Brain microvascular endothelial cell (primary cell): ENCODE measurements at regions of chr1 and their contacts with region 1.

Region 1: DNA sequence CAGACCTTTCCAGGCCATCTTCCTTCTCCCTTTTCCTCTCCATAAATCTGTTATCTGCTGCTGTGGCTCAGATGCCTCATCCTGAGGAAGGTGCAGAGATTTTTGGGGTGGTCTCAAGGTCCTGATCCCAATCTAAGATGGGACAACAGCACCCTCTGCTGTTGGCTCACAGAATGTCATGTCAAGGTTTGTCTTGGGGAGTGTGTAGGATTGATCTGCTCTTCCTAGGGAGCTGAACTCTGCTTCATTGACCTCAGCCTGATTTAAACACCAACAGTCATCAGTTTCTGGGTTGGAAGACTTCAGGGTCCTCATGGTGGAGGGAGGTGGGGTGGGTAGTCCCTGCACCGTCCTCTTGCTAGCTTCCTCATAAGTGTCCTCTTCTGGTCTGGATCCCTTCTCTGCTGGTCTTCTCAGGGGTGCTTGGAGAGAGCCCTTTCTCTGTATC is 62.8 kb upstream of the LAX1 start:
- DNase-seq: peak; percentile 22
- H3K4me3 ChIP-seq: no peak overlapping the region
- H3K27ac ChIP-seq: no peak overlapping the region
- H3K27me3 ChIP-seq: no peaks in the 10 kb centered on the region
- CTCF ChIP-seq: peak; percentile 83

Region 2: GRCh38 chr1:203504397-203505250 is 197.5 kb before region 1 on chr1:
- in situ Hi-C with region 1: loop called (anchors 25 kb)
- DNase-seq: peak; percentile 76
- H3K4me3 ChIP-seq: no peak overlapping the region
- H3K27ac ChIP-seq: no peak overlapping the region
- H3K27me3 ChIP-seq: no peaks in the 10 kb centered on the region
- CTCF ChIP-seq: peak; percentile 81